ENCODE measurements at regions of chr12 and their contacts with region 1.

Region 1: GRCh38 chr12:2959505-2960389 is 550 bp downstream of the TEAD4 start:
- DNase-seq: no peak
- H3K4me3 Mint-ChIP-seq: peak overlapping the region; percentile 75
- H3K27ac Mint-ChIP-seq: no peak overlapping the region
- H3K4me1 Mint-ChIP-seq: peaks cover 12% of the 10 kb centered on the region
- H3K27me3 Mint-ChIP-seq: peaks cover 52% of the 10 kb centered on the region

Region 2: GRCh38 chr12:1670815-1671268 is 1288.9 kb before region 1 on chr12:
- intact Hi-C with region 1: loop called (anchors 10 kb)
- DNase-seq: no peak
- H3K4me3 Mint-ChIP-seq: no peak overlapping the region
- H3K27ac Mint-ChIP-seq: no peak overlapping the region
- H3K4me1 Mint-ChIP-seq: peaks cover 31% of the 10 kb centered on the region
- H3K27me3 Mint-ChIP-seq: peaks cover 3% of the 10 kb centered on the region